ENCODE measurements at regions of chr13 and their contacts with region 1.

Region 1: DNA sequence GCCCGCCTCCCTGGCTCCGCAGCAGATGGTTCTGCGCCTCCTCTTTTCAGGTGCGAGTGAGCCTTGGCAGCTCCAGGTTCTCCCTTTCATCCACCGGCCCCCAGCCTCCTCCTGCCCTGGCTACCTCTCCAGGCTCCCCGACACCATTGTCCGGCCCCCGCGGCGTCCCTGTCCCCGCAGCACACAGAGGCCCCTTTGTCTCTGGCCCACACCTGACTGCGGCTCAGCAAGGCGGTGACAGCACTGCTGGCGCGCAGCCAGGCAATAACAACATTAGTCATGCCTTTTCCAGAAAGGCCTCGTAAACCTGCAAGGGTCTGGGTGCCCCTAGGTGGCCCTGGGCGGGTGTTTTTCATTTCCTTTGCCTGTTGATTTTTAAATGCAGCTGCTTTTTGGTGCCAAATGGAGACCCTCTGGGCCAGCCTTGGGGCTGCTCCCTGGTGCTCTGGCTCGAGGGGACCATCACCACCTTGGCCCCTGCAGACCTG is 73.2 kb upstream of the MEDAG start:
- DNase-seq: peak; percentile 97
- ATAC-seq: peak; percentile 95
- H3K4me3 ChIP-seq: peak overlapping the region in 1 of 3 experiments; percentile 56; a peak in 2 of 6 replicates
- H3K27ac ChIP-seq: peak overlapping the region; percentile 74
- H3K4me1 ChIP-seq: peaks cover 84% of the 10 kb centered on the region
- H3K27me3 ChIP-seq: no peaks in the 10 kb centered on the region
- CTCF ChIP-seq: peak; percentile 37; the same call in 1 of the 2 replicates
- EP300 ChIP-seq: peak; percentile 17 to 84; a peak in 3 of 4 replicates
- POLR2A ChIP-seq: no peak
- RAD21 ChIP-seq: no peak

Region 2: DNA sequence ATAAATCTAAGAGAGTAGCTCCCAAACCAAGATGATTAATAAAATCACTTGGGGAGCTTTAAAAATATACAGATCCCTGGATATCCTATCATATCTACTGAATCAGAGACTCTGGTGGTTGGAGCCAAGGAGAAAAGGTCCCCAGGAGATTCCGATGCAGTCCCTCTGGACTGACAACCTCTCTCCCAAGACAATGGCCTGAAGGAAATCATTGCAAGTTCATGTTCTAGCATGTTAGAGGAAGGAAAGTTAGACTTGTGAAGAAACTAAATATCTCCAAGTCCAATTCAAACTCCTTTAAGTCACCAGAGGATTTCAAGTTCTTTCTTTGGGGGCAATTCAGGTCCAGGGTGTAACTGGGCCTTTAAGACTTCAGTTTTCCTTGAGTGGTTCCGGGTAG is 11.5 kb before region 1 on chr13:
- CTCF ChIA-PET with region 1: no interaction called
- POLR2A ChIA-PET with region 1: interaction called, 18 read pairs
- in situ Hi-C with region 1: no loop called
- intact Hi-C with region 1: no loop called
- DNase-seq: no peak
- ATAC-seq: no peak
- H3K4me3 ChIP-seq: no peak overlapping the region
- H3K27ac ChIP-seq: no peak overlapping the region
- H3K4me1 ChIP-seq: peaks cover 65% of the 10 kb centered on the region
- H3K27me3 ChIP-seq: 0 out of 5 replicates have a peak, but pooled peaks cover 0 to 1% of the 10 kb centered on the region in 2 experiments
- CTCF ChIP-seq: no peak
- EP300 ChIP-seq: no peak
- POLR2A ChIP-seq: no peak
- RAD21 ChIP-seq: no peak

Region 3: GRCh38 chr13:30847650-30848307 is 14.9 kb after region 1 on chr13:
- CTCF ChIA-PET with region 1: no interaction called
- POLR2A ChIA-PET with region 1: interaction called, 5 read pairs
- in situ Hi-C with region 1: no loop called
- intact Hi-C with region 1: loop called (anchors 2 kb)
- DNase-seq: no peak
- ATAC-seq: no peak
- H3K4me3 ChIP-seq: 0 out of 6 replicates have a peak overlapping the region, but pooled peaks of 1 of the 3 experiments have one; percentile 27
- H3K27ac ChIP-seq: no peak overlapping the region
- H3K4me1 ChIP-seq: peaks cover 97% of the 10 kb centered on the region
- H3K27me3 ChIP-seq: no peaks in the 10 kb centered on the region
- CTCF ChIP-seq: no peak
- EP300 ChIP-seq: no peak
- POLR2A ChIP-seq: no peak
- RAD21 ChIP-seq: no peak

Region 4: GRCh38 chr13:30865123-30866049 is 32.5 kb after region 1 on chr13:
- CTCF ChIA-PET with region 1: no interaction called
- POLR2A ChIA-PET with region 1: interaction called, 5 read pairs
- in situ Hi-C with region 1: no loop called
- intact Hi-C with region 1: loop called (anchors 1 kb)
- DNase-seq: peak; percentile 80
- ATAC-seq: peak; percentile 97
- H3K4me3 ChIP-seq: peak overlapping the region in 2 of 3 experiments; percentile 40 to 54; a peak in 3 of 6 replicates
- H3K27ac ChIP-seq: peak overlapping the region; percentile 7
- H3K4me1 ChIP-seq: peaks cover 64% of the 10 kb centered on the region
- H3K27me3 ChIP-seq: no peaks in the 10 kb centered on the region; a peak in 1 of 5 replicates
- CTCF ChIP-seq: peak; percentile 97
- EP300 ChIP-seq: no peak
- POLR2A ChIP-seq: peak in 1 of 2 experiments; percentile 21; a peak in 1 of 4 replicates
- RAD21 ChIP-seq: peak; percentile 93